ENCODE measurements at regions of chr11 and their contacts with region 1.

Region 1: DNA sequence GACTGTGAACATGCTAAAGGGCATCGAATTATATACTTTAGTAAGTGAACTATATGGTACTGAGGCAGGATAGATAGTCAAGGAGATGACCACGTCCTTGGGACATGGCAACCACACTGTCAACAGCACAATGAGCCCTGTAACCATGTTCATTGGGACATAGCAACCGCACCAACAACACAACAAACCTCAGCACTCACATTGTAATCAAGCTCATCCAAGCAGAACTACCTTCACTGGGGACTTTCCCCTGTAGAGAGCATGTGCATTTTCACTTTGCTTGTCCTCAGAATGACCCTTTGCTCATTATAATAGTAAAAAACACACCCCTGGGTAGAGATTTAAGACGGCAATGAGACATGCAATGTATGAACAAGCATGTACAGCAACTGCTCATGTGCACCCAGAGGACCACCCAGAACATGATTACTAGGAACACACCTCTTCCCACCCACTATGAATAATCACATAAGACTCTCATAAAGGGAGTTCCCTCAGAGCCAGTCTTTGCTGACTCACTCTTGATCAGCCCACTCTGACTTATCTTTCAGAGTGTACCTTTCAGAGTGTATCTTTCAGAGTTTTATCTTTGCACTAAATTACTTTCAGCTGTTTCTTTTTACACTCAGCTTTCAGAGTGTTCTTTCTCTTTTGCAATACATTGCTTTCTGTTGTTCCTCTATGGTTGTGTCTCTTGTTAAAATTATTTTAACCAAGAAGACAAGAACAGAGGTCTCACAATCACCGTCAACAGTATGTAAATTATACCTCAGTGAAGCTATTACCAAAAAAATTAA is 4.1 kb upstream of the PLAAT2 start:
- DNase-seq: peak; percentile 97
- ATAC-seq: peak; percentile 81
- H3K4me3 ChIP-seq: peak overlapping the region in 3 of 5 experiments; percentile 21 to 59 (median 34)
- H3K4me3 Mint-ChIP-seq: peak overlapping the region; percentile 79
- H3K27ac ChIP-seq: peak overlapping the region; percentile 92 to 94
- H3K27ac Mint-ChIP-seq: peak overlapping the region; percentile 97
- H3K4me1 ChIP-seq: peaks cover 38 to 51% of the 10 kb centered on the region in 2 donors
- H3K4me1 Mint-ChIP-seq: peaks cover 44% of the 10 kb centered on the region
- H3K27me3 ChIP-seq: no peaks in the 10 kb centered on the region
- H3K27me3 Mint-ChIP-seq: peaks cover 4% of the 10 kb centered on the region
- CTCF ChIP-seq: no peak

Region 2: DNA sequence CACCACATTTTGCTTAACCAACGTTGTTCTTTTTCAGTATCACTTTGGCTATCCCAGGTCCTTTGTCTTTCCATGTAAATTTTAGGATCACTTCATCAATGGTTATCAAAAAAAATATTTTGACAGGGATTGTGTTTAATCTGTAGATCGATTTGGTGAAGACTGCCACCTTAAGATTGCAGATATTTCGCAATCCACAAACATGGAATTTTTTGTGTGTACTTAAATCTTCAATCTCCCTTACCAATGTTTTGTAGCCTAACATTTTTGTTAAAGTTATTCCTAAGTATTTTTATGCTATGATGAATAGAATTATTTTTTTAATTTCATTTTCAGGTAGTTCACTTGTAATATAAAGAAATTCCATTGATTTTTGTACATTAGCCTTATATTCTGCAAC is 94.9 kb before region 1 on chr11:
- CTCF ChIA-PET with region 1: no interaction called
- POLR2A ChIA-PET with region 1: no interaction called
- intact Hi-C with region 1: no loop called
- DNase-seq: no peak
- ATAC-seq: no peak
- H3K4me3 ChIP-seq: no peak overlapping the region
- H3K4me3 Mint-ChIP-seq: no peak overlapping the region
- H3K27ac ChIP-seq: no peak overlapping the region
- H3K27ac Mint-ChIP-seq: no peak overlapping the region
- H3K4me1 ChIP-seq: no peaks in the 10 kb centered on the region
- H3K4me1 Mint-ChIP-seq: no peaks in the 10 kb centered on the region
- H3K27me3 ChIP-seq: peaks cover 0 to 5% (median under 1%) of the 10 kb centered on the region in 4 experiments
- H3K27me3 Mint-ChIP-seq: peaks cover 17% of the 10 kb centered on the region
- CTCF ChIP-seq: no peak

Region 3: DNA sequence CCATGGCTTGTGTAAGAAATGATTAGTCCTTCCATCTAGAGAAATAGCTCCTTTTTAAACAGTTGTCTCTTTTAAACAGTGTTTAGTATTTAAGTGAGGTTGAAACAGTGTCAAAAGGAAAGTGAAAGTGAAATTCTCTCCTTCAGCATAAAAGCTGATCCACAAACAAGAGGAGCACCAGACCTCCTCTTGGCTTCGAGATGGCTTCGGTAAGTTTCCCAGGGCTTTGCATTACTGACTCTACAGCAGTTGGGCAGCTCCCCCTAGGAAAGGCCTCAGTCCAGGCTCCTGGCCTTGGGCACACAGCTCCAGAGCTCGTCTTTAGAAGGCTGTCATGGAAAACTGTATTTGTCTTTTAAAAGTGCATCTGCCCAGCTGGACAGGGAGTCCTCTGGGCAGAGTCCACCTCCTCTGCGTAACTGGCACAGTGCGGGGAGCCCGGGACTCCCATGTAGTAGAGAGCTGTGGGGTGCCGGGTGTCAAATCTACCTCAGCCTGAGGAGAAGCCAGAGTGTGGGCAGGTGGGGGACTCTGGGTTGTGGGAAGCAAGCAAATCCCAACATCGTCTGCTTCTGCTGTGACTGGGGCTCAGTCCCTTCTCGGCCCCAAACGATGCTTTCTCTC is 30.5 kb before region 1 on chr11 and contains the start of gene PLAAT4:
- CTCF ChIA-PET with region 1: interaction called, 8 read pairs
- POLR2A ChIA-PET with region 1: interaction called, 6 read pairs
- intact Hi-C with region 1: loop called (anchors 1 kb)
- DNase-seq: peak; percentile 63
- ATAC-seq: peak; percentile 64
- H3K4me3 ChIP-seq: peak within 1 kb of the TSS; percentile 1 to 89 (median 64)
- H3K4me3 Mint-ChIP-seq: peak within 1 kb of the TSS; percentile 84
- H3K27ac ChIP-seq: peak within 1 kb of the TSS; percentile 63
- H3K27ac Mint-ChIP-seq: peak within 1 kb of the TSS; percentile 86
- H3K4me1 ChIP-seq: peaks cover 22 to 34% of the 10 kb centered on the region in 2 donors
- H3K4me1 Mint-ChIP-seq: peaks cover 43% of the 10 kb centered on the region
- H3K27me3 ChIP-seq: no peaks in the 10 kb centered on the region
- H3K27me3 Mint-ChIP-seq: no peaks in the 10 kb centered on the region
- CTCF ChIP-seq: no peak
- total RNA-seq, gene PLAAT4: 12.6 and 13.1 TPM in 2 replicates

Region 4: GRCh38 chr11:63543711-63544110 is 23.5 kb before region 1 on chr11:
- CTCF ChIA-PET with region 1: no interaction called
- POLR2A ChIA-PET with region 1: no interaction called
- intact Hi-C with region 1: loop called (anchors 2 kb)
- DNase-seq: peak; percentile 49
- ATAC-seq: peak; percentile 60
- H3K4me3 ChIP-seq: no peak overlapping the region
- H3K4me3 Mint-ChIP-seq: no peak overlapping the region
- H3K27ac ChIP-seq: no peak overlapping the region
- H3K27ac Mint-ChIP-seq: no peak overlapping the region
- H3K4me1 ChIP-seq: peaks cover 9 to 11% of the 10 kb centered on the region in 2 donors
- H3K4me1 Mint-ChIP-seq: peaks cover 15% of the 10 kb centered on the region
- H3K27me3 ChIP-seq: no peaks in the 10 kb centered on the region
- H3K27me3 Mint-ChIP-seq: no peaks in the 10 kb centered on the region
- CTCF ChIP-seq: no peak

Region 5: GRCh38 chr11:63592975-63593395 is 25.7 kb after region 1 on chr11:
- CTCF ChIA-PET with region 1: no interaction called
- POLR2A ChIA-PET with region 1: interaction called, 13 read pairs
- intact Hi-C with region 1: no loop called
- DNase-seq: no peak
- ATAC-seq: no peak
- H3K4me3 ChIP-seq: no peak overlapping the region
- H3K4me3 Mint-ChIP-seq: no peak overlapping the region
- H3K27ac ChIP-seq: no peak overlapping the region
- H3K27ac Mint-ChIP-seq: no peak overlapping the region
- H3K4me1 ChIP-seq: no peaks in the 10 kb centered on the region
- H3K4me1 Mint-ChIP-seq: no peaks in the 10 kb centered on the region
- H3K27me3 ChIP-seq: no peaks in the 10 kb centered on the region
- H3K27me3 Mint-ChIP-seq: peaks cover 4% of the 10 kb centered on the region
- CTCF ChIP-seq: no peak

Region 6: DNA sequence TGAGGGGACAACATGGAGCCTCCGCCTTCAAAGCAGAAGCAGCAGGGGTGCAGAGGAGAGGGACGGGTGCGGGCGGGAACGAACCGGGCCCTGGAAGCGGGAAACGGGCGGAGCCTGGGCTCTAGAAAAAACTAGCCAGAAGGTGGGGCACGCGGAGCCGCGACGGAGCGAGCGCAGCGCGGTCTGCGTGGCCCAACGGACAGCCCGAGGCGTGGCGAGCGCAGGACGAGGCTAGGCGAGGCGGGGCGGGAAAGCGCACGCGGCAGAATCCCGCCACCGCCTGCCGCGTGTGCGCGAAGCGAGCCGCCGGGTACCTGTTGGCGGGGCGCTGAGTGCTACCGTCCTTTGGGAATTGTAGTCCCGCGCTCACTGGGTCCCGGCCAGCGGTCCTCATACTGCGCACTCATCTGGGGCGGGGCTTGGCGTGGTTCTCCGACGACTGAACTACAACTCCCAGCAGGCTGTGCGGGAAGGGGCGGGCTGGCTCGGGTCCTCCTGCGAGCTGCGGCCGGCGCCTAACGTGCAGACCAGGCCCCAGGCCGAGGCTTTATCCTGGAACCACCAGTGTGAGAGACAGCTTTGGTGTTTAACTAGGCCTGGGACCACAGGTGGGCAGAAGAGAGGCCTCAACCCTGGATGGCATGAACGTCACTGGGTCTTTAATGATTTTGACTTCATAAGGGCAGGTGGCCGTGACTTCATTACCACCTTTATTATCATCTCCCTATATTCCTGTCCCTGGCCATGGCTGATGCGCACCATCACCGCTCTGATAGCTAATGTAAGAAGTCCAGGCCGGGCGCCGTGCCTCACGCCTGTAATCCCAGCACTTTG is 104.3 kb after region 1 on chr11 and contains the start of gene ATL3:
- CTCF ChIA-PET with region 1: no interaction called
- POLR2A ChIA-PET with region 1: no interaction called
- intact Hi-C with region 1: loop called (anchors 2 kb)
- DNase-seq: peak; percentile 97
- ATAC-seq: peak; percentile 92
- H3K4me3 ChIP-seq: peak within 1 kb of the TSS; percentile 22 to 81 (median 78)
- H3K4me3 Mint-ChIP-seq: peak within 1 kb of the TSS; percentile 88
- H3K27ac ChIP-seq: peak within 1 kb of the TSS; percentile 62 to 73
- H3K27ac Mint-ChIP-seq: peak within 1 kb of the TSS; percentile 92
- H3K4me1 ChIP-seq: peaks cover 9 to 13% of the 10 kb centered on the region in 2 donors
- H3K4me1 Mint-ChIP-seq: peaks cover 22% of the 10 kb centered on the region
- H3K27me3 ChIP-seq: no peaks in the 10 kb centered on the region
- H3K27me3 Mint-ChIP-seq: no peaks in the 10 kb centered on the region
- CTCF ChIP-seq: no peak
- total RNA-seq, gene ATL3: 33.8 and 36.5 TPM in 2 replicates

Measured in B cell (primary cell).